ENCODE measurements at regions of chr15 and their contacts with region 1.

Region 1: DNA sequence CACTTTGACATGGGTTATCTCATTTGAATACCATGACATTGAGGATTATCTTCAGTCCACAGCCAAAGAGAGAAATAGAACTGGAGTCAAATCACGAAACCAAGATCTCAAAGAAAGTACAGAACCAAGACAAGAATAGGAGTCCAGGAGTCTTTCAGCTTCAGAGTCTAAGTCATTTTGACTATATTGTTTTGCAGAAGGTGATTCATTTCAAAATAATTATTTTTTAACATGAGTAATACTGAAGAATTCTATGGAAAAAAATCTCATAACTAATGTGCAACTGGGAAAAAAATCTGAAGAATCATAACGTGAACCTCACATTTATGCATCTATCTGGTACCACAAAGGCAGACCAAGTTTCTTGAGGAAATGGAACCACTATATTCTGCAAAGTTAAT is 60.3 kb downstream of the UBE3A start:
- DNase-seq: no peak
- H3K4me3 ChIP-seq: no peak overlapping the region
- H3K27ac ChIP-seq: no peak overlapping the region
- H3K4me1 ChIP-seq: no peaks in the 10 kb centered on the region
- CTCF ChIP-seq: no peak

Region 2: DNA sequence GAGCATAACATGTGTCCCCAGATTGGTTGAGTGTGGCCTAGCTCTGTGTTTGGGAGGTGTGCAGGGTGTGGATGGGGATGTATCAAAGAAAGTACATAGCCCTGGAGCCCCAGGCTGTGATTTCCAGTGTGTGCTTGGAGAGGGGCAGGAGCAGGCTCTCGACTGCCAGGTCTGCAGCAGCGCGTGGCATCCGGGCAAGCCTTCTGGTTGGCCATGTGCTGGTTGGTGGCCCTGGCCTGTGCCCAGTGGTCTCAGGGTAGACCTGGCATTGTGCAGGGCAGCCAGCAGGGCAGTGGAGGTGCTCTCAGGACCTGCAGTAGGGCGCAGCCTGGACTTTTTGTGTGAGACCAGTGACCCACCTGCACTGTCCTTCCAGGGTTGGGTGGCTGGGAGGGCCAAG is 171.1 kb before region 1 on chr15:
- CTCF ChIA-PET with region 1: no interaction called
- POLR2A ChIA-PET with region 1: no interaction called
- intact Hi-C with region 1: no loop called
- DNase-seq: no peak
- H3K4me3 ChIP-seq: no peak overlapping the region
- H3K27ac ChIP-seq: no peak overlapping the region
- H3K4me1 ChIP-seq: no peaks in the 10 kb centered on the region
- CTCF ChIP-seq: no peak

Region 3: DNA sequence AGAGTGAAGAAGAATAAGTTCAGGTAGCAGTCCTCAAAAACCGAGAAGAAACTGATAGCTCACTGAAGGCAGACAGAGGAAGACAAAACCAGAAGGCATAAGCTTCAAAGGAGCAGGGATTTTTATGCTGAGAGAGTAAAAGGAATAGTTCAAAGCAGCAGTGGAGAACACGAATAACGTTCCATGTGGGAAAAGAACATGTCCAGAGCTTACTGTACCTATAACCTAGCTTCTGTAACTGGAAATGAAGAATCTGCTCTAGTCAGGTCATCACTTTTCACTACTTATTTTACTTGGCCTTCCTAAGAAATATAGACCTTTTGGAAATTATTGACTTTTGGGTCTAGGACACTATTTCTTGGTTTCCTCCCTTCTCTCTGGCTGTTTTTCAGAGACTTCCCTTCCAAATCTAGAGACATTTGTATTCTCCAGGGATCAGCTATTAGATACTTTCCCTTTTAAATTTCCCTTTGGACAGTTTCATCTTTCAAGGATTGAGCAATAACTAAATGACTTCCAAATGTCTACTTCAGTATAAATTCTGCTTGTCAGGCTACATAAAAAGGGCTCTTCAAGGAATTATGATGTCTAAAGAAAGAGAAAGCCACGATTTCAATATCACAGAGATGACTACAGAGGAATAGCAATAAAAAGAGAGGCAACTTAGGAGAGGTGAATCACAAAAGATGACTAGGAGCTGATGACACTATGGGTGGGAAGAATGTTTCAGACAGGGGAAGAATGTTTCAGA is 13.6 kb after region 1 on chr15:
- CTCF ChIA-PET with region 1: no interaction called
- POLR2A ChIA-PET with region 1: interaction called, 10 read pairs
- intact Hi-C with region 1: no loop called
- DNase-seq: no peak
- H3K4me3 ChIP-seq: no peak overlapping the region
- H3K27ac ChIP-seq: no peak overlapping the region
- H3K4me1 ChIP-seq: no peaks in the 10 kb centered on the region
- CTCF ChIP-seq: no peak

Region 4: GRCh38 chr15:25441111-25441510 is 62.6 kb after region 1 on chr15:
- CTCF ChIA-PET with region 1: no interaction called
- POLR2A ChIA-PET with region 1: no interaction called
- intact Hi-C with region 1: no loop called
- DNase-seq: no peak
- H3K4me3 ChIP-seq: no peak overlapping the region
- H3K27ac ChIP-seq: no peak overlapping the region
- H3K4me1 ChIP-seq: peaks cover 16% of the 10 kb centered on the region
- CTCF ChIP-seq: no peak

Region 5: DNA sequence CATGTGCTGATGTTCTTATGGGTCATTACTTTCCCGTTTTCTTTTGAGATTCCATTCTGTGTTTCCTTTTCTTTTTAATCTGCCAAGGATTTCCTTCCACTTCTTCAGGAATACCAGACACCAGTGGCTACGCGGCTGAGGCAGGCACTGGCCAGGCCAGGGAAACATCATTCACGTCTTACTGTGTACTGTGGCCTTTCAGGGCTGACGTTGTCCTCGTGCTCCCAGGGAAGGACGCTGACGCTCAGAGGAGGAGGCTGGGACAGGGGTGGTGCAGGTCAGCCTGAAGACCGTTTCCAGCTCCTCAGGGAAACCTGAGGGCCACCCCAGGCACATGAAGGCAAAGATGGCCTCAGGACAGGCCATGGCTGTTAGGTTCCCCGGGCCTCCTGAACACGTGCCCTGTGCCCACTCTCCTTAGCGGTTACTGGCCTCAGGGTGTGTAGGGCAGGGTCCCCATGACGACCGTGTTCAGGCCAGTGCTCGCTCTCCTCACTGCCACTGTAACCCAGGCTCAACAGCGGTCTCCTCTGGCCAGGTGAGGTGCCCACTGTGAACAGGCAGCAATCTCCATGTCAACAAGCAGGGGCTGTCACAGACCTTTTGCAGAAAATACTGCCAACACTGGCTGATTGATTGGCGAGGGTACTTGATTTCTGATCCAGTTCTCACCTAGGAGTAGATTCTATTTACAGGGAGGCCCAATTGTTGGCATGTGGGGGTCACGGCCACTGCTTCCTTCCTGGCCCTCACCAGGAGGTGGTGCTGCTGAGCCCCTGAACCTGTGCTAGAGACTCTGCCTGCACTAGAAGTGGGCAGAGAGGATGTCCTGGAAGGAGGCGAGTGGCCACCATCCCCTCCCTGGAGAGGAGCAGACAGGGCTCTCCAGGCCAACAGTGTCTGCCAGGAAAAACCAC is 315.1 kb after region 1 on chr15:
- CTCF ChIA-PET with region 1: no interaction called
- POLR2A ChIA-PET with region 1: no interaction called
- intact Hi-C with region 1: no loop called
- DNase-seq: peak; percentile 45
- H3K4me3 ChIP-seq: no peak overlapping the region
- H3K27ac ChIP-seq: no peak overlapping the region
- H3K4me1 ChIP-seq: no peaks in the 10 kb centered on the region
- CTCF ChIP-seq: peak; percentile 82

Measured in OCI-LY7 (cell line).